ENCODE measurements at regions of chr20 and their contacts with region 1.

Region 1: GRCh38 chr20:18287915-18288748 is at the start of gene ZNF133:
- DNase-seq: peak; percentile 96
- H3K4me3 Mint-ChIP-seq: peak within 1 kb of the TSS; percentile 94
- H3K27ac Mint-ChIP-seq: peak within 1 kb of the TSS; percentile 97
- H3K4me1 Mint-ChIP-seq: peaks cover 23% of the 10 kb centered on the region
- H3K27me3 Mint-ChIP-seq: peaks cover 16% of the 10 kb centered on the region
- total RNA-seq, gene ZNF133: 7.6 and 7.8 TPM in 2 replicates

Region 2: DNA sequence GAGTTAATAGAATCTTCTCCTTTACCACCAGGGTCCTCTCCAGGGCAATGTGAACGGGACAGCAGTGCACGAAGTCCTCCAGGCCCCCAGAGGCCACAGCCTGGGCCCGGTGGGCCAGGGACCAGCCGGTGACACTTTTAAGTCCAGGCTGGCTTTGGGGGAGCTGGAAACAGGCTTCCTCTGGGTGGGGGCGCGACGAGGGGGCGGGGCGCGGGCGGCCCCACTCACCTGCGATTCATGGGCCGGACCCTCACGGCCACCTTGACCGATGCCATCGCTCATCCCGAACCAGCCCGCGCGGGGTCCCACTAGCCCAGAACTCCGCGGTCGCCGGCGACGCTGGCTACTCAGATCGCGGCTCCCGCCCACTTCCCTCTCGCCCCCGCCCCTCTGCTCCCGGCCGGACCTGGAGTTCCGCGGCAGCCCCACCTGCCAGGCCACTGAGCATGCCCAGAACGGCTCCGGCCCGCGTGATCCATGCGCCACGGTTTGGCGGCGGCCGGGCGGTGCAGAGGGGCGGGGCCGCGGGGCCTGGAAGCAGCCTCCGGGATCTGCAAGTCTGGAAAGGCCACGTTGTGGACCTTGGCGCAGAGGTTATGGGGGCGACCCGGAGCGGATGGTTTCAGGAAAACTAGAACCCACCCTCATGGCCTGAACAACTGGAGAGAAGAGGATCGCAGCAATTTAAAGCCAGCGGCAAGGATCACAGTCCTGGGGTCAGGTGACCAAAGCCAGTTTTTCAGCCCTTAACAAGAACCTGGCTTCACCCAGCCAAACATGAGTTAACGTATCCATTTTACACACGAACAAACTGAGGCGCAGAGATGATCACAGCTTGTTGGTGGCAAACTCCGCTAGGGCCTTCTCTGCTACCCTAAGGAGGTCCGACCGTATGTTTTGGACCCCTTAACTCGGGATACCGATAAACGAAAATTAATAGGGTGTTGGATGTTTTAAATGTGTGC is 1714.8 kb before region 1 on chr20 and contains the start of gene KIF16B:
- intact Hi-C with region 1: loop called (anchors 5 kb)
- DNase-seq: peak; percentile 83
- H3K4me3 Mint-ChIP-seq: peak within 1 kb of the TSS; percentile 90
- H3K27ac Mint-ChIP-seq: peak within 1 kb of the TSS; percentile 91
- H3K4me1 Mint-ChIP-seq: peaks cover 36% of the 10 kb centered on the region
- H3K27me3 Mint-ChIP-seq: no peaks in the 10 kb centered on the region
- total RNA-seq, gene KIF16B: 7.2 and 8.1 TPM in 2 replicates

Region 3: DNA sequence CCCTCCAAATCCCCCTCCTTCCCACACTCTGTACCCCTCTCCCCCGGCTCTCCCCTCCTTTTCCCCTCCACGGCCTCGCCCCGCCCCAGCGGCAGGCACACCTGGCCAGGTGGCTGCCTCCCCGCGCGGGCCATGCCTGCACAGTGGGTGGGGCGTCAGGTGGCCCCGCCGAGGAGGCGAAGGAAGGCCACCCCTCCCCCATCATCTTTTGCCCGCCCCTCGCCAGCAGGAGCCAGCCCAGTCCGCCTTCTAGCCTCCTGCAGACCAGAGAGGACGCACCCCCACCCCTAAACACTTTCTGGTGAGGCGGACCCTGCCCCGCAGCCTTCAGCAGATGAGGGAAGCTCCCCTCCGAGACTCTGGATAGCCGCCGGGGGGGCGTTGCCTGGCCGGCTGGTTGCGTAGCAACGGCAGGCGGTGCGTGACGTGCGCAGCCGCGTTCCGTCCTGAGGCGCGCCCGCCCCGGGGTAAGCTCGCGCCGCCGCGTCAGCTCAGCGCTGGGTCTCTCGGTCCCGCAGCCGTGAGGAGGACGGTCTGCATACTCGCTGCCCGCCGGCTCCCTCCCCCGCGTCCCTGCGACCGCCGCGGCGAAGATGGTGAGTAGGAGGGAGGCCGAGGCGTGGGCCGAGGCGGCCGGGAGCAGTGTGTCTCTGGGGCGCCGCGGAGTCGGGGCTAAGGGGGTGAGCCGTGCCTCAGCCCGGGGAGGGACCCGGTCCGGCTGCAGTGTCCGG is 718.4 kb before region 1 on chr20 and contains the start of gene DSTN:
- intact Hi-C with region 1: loop called (anchors 5 kb)
- DNase-seq: peak; percentile 86
- H3K4me3 Mint-ChIP-seq: peak within 1 kb of the TSS; percentile 94
- H3K27ac Mint-ChIP-seq: peak within 1 kb of the TSS; percentile 93
- H3K4me1 Mint-ChIP-seq: peaks cover 19% of the 10 kb centered on the region
- H3K27me3 Mint-ChIP-seq: peaks cover 6% of the 10 kb centered on the region
- total RNA-seq, gene DSTN: 58.2 and 58.8 TPM in 2 replicates

Region 4: DNA sequence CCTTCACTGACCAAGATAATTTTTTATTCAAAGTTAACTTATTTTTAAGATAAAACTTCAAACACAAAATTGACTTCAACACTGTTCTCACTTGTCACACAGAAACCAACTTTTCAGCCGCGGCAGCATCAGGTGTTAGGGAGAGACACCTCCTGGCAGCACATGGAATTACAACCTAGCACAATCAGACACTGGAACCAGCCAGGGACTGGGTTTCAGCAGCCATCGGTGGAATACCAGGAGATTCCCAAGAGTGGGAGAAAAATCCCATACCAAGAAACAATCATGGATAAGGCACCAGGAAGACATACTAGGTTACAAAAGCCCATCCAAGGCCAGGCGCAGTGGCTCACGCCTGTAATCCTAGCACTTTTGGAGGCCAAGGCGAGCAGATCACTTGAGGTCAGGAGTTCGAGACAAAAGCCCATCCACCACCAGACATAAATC is 389.6 kb before region 1 on chr20:
- intact Hi-C with region 1: loop called (anchors 5 kb)
- DNase-seq: peak; percentile 44
- H3K4me3 Mint-ChIP-seq: no peak overlapping the region
- H3K27ac Mint-ChIP-seq: no peak overlapping the region
- H3K4me1 Mint-ChIP-seq: peaks cover 37% of the 10 kb centered on the region
- H3K27me3 Mint-ChIP-seq: peaks cover 17% of the 10 kb centered on the region

Region 5: DNA sequence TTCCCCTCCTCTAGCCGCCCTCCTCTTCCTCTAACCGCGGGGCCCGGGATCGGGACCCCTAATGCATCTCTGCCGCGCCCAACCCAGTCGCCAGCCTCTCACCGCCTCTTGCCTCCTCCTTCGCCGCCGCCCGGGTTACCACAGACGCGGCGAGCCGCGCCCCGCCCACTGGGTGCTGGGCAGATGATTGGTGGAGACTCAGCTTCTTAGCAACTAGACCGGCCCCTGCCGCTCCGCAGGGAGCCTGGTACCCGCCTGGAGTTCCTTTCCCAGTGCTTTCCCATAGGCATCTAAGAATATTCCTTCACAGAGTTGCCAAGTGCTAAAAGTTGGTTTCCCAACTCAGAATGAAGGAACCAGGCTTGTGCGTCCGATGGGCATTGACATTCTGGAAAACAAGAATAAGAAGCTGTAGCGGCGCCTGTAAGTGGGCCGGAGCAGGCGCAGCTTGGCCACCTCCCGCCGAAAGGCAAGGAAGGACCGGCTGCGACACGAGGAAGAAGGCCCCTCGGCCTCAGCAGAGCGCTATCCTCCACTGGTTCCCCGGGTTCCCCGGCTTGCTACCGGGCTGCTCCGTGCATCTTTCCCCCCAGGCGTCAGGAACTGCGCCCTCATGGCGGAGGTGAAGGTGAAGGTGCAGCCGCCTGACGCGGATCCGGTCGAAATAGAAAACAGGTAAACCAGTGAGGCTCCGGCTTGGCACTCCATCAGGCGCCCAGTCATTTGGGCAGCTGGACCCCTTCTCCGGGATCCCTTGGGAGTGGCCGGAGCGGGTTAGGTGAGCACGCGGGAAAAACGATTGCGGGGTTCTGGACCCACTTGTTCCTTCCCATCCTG is 179.0 kb after region 1 on chr20 and contains the starts of genes DZANK1 and POLR3F:
- intact Hi-C with region 1: loop called (anchors 1 kb)
- DNase-seq: peak; percentile 90
- H3K4me3 Mint-ChIP-seq: peak within 1 kb of the TSS; percentile 99
- H3K27ac Mint-ChIP-seq: peak within 1 kb of the TSS; percentile 92
- H3K4me1 Mint-ChIP-seq: peaks cover 31% of the 10 kb centered on the region
- H3K27me3 Mint-ChIP-seq: no peaks in the 10 kb centered on the region
- total RNA-seq, gene DZANK1: 1.1 and 1.8 TPM in 2 replicates
- total RNA-seq, gene POLR3F: 13.4 and 16.6 TPM in 2 replicates

Region 6: GRCh38 chr20:18507218-18508021 is 219.3 kb after region 1 on chr20 and contains the start of gene SEC23B:
- intact Hi-C with region 1: loop called (anchors 1 kb)
- DNase-seq: peak; percentile 97
- H3K4me3 Mint-ChIP-seq: peak within 1 kb of the TSS; percentile 99
- H3K27ac Mint-ChIP-seq: peak within 1 kb of the TSS; percentile 100
- H3K4me1 Mint-ChIP-seq: peaks cover 44% of the 10 kb centered on the region
- H3K27me3 Mint-ChIP-seq: peaks cover 2% of the 10 kb centered on the region
- total RNA-seq, gene SEC23B: 110 and 113 TPM in 2 replicates

Region 7: DNA sequence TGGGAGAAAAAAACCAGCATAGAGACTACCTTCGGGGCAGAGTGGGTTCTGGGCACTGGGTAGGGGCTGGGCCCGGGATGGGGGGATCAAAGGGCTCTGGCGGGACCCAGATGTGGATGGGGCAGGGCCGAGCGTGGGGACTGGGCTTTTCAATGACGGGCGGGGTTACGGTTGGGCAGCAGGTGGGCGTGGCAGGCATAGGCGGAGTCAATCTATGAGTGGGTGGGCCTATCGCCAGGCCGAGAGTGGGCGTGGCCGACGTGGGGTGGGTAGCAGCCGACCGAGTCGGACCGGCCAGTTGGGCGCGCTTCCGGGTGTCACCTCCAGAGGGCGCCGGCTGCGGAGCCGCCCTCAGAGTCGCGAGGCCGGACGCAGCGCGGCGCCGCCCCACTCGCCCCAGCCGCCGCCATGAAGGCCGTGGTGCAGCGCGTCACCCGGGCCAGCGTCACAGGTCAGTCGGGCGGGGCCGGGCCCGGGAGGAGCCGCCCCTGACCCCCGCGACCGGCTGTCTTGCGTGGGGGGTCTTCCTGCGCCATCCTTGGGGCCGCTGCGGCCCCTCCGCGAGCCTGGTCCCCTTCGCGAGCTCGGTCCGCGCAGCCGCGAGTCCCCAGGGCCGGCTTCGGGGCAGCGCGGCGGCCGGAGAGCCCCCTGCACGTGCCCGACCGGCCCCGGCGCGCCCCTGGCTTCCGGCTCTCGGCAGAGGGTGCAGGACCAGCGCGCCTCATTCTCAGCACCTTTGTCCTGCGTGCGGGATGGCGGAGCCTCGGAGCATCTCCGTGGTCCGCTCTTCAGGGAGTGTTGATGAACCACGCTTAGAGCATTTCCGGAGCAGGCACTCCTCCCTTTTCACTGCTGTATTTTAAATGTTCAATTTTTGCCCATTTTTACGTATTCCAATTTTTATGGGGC is 299.8 kb after region 1 on chr20 and contains the start of gene DTD1:
- intact Hi-C with region 1: loop called (anchors 1 kb)
- DNase-seq: peak; percentile 80
- H3K4me3 Mint-ChIP-seq: peak within 1 kb of the TSS; percentile 93
- H3K27ac Mint-ChIP-seq: peak within 1 kb of the TSS; percentile 82
- H3K4me1 Mint-ChIP-seq: peaks cover 25% of the 10 kb centered on the region
- H3K27me3 Mint-ChIP-seq: peaks cover 10% of the 10 kb centered on the region
- total RNA-seq, gene DTD1: 37.7 and 44.0 TPM in 2 replicates

Measured in activated T-helper 1 cell treated with anti-CD3 and anti-CD28 coated beads, Interleukin-12 subunit alpha, Interleukin-12 subunit beta, Interleukin-2, Interleukin-4 antibody, amounts not matched to agents 30 ng/mL and 10 ng/mL and 1 ng/mL, durations not matched to agents 14 hours and 24 hours and 36 hours (primary cell).